Sciatic nerve (tissue), 2 donors: ENCODE measurements at regions of chr16 and their contacts with region 1.

Region 1: GRCh38 chr16:25066747-25067631 is 44.6 kb upstream of the LCMT1 start:
- DNase-seq: peak; percentile 92
- ATAC-seq: peak; percentile 97

Region 2: GRCh38 chr16:25143928-25144327 is 76.9 kb after region 1 on chr16:
- intact Hi-C with region 1: no loop called
- DNase-seq: no peak
- ATAC-seq: no peak

Region 3: GRCh38 chr16:25224731-25225319 is 157.8 kb after region 1 on chr16:
- intact Hi-C with region 1: loop called (anchors 10 kb)
- DNase-seq: no peak
- ATAC-seq: no peak